Right cardiac atrium (tissue), 5 donors: ENCODE measurements at regions of chr12 and their contacts with region 1.

Region 1: GRCh38 chr12:119412811-119413794 is 78.6 kb downstream of the CCDC60 start:
- DNase-seq: peak; percentile 55 to 84 (median 74)
- ATAC-seq: peak; percentile 60 to 63
- H3K4me3 ChIP-seq: no peak overlapping the region
- H3K27ac ChIP-seq: no peak overlapping the region
- H3K4me1 ChIP-seq: no peaks in the 10 kb centered on the region
- H3K27me3 ChIP-seq: no peaks in the 10 kb centered on the region

Region 2: GRCh38 chr12:118979763-118980406 is 433.2 kb before region 1 on chr12:
- intact Hi-C with region 1: loop called in 1 of 4 experiments (anchors 10 kb)
- DNase-seq: peak; percentile 23 to 60 (median 54)
- ATAC-seq: peak; percentile 40 to 59
- H3K4me3 ChIP-seq: peak overlapping the region; percentile 32
- H3K27ac ChIP-seq: no peak overlapping the region
- H3K4me1 ChIP-seq: no peaks in the 10 kb centered on the region
- H3K27me3 ChIP-seq: peaks cover 5% of the 10 kb centered on the region

Region 3: GRCh38 chr12:119115296-119115905 is 297.7 kb before region 1 on chr12:
- intact Hi-C with region 1: loop called (anchors 2 to 5 kb)
- DNase-seq: no peak
- ATAC-seq: peak; percentile 51 to 59
- H3K4me3 ChIP-seq: no peak overlapping the region
- H3K27ac ChIP-seq: no peak overlapping the region
- H3K4me1 ChIP-seq: no peaks in the 10 kb centered on the region
- H3K27me3 ChIP-seq: no peaks in the 10 kb centered on the region